ENCODE measurements at regions of chr17 and their contacts with region 1.

Region 1: DNA sequence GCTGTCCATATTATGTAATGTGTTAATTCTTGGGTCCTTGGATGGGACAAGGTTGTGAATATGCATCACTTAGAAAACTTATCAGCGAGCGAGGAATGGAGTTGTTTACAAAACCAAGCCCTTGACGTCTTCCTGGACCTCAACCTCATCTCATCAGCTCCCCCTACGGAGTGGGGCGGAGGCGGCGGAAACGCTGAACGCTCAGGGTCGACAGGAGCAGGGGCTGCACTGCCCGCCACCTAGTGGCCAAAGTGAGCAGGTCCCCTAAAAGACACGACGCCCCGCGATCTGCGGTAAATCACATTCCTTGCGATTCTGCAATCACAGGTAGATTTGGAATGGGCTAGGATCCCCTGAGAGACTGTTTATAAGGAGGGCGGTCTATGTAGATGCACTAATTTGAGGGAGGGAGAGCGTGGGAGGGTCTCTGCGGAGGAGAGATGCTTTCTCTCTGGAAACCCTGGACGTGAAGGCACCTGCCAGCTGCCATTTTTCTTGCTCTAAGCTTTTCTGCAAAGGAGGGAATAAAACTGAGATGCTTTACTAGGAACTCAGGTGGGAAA is 5.4 kb upstream of the ICAM2 start:
- DNase-seq: peak; percentile 90
- ATAC-seq: peak; percentile 83 to 92
- H3K4me3 ChIP-seq: no peak overlapping the region
- H3K27ac ChIP-seq: peak overlapping the region; percentile 63
- H3K4me1 ChIP-seq: peaks cover 28% of the 10 kb centered on the region
- H3K27me3 ChIP-seq: no peaks in the 10 kb centered on the region
- CTCF ChIP-seq: peak; percentile 92

Region 2: GRCh38 chr17:63827002-63827771 is 198.6 kb before region 1 on chr17 and contains the starts of genes FTSJ3 and PSMC5:
- intact Hi-C with region 1: no loop called
- DNase-seq: peak; percentile 97
- ATAC-seq: peak; percentile 96 to 98
- H3K4me3 ChIP-seq: peak within 1 kb of the TSS; percentile 90
- H3K27ac ChIP-seq: peak within 1 kb of the TSS; percentile 91
- H3K4me1 ChIP-seq: peaks cover 32% of the 10 kb centered on the region
- H3K27me3 ChIP-seq: no peaks in the 10 kb centered on the region
- CTCF ChIP-seq: peak; percentile 66
- total RNA-seq, gene FTSJ3: 37.4 TPM
- total RNA-seq, gene PSMC5: 98.6 TPM

Region 3: DNA sequence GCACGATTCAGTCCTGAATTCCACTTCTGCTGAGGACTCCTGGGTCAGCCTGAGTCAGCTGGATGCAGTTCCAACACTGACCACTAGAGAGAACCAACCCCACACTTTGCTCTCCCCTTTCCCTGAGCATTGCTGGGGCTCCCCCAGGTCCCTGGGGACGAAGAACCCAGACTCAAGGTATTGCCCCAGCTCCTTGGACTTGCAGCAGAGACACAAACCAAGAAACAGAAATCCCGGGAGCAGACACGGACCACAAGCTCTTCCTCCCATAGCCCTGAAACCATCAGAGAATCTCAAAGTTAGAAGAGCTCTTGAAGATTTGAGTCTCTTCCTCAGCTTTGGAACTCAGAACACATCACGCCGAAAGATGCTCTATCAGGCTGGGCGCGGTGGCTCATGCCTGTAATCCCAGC is 106.5 kb before region 1 on chr17:
- intact Hi-C with region 1: no loop called
- DNase-seq: no peak
- ATAC-seq: peak; percentile 89 to 91
- H3K4me3 ChIP-seq: no peak overlapping the region
- H3K27ac ChIP-seq: no peak overlapping the region
- H3K4me1 ChIP-seq: no peaks in the 10 kb centered on the region
- H3K27me3 ChIP-seq: peaks cover 5% of the 10 kb centered on the region
- CTCF ChIP-seq: peak; percentile 94

Region 4: GRCh38 chr17:64129764-64130558 is 104.1 kb after region 1 on chr17 and contains the start of gene ERN1:
- intact Hi-C with region 1: loop called (anchors 10 kb)
- DNase-seq: peak; percentile 97
- ATAC-seq: peak; percentile 96 to 98
- H3K4me3 ChIP-seq: peak within 1 kb of the TSS; percentile 81
- H3K27ac ChIP-seq: peak within 1 kb of the TSS; percentile 98
- H3K4me1 ChIP-seq: peaks cover 34% of the 10 kb centered on the region
- H3K27me3 ChIP-seq: no peaks in the 10 kb centered on the region
- CTCF ChIP-seq: no peak
- total RNA-seq, gene ERN1: 39.7 TPM

Measured in lower lobe of right lung (tissue), 2 donors.